Calu3 (cell line): ENCODE measurements at regions of chr4 and their contacts with region 1.

Region 1: DNA sequence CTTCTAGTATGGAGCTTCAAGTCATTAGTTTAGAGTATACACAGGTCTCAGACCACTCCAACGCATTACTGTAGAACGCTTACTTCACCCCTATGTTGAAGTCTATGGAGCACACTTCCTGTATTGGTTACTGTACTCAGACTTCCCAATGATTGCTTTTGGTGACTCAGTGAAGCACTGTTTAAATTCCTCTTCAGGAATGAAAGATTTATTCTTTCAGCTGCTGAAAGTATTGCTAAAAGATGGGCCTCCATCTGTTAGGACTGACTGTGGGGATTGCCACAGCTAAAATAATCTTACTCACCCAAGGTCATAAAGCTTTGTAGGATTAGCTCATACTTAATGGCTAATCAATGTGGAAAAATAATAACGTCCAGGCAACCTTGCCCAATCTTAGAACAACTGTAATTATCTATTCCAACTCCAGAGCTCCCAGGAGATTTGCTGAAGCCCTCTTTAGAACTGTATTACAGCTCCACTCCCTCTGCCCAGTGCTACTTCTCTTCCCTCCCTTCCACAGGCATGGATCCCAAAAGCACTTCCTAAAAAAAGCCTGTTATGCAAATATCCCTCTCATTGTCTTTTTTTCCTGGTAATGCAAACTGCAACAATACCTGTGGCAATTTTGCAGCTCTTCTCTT is 281.9 kb upstream of the HS3ST1 start:
- DNase-seq: no peak
- H3K4me3 Mint-ChIP-seq: no peak overlapping the region
- H3K27ac Mint-ChIP-seq: peak overlapping the region; percentile 43
- H3K4me1 Mint-ChIP-seq: peaks cover 20% of the 10 kb centered on the region
- H3K27me3 Mint-ChIP-seq: no peaks in the 10 kb centered on the region
- CTCF ChIP-seq: no peak

Region 2: DNA sequence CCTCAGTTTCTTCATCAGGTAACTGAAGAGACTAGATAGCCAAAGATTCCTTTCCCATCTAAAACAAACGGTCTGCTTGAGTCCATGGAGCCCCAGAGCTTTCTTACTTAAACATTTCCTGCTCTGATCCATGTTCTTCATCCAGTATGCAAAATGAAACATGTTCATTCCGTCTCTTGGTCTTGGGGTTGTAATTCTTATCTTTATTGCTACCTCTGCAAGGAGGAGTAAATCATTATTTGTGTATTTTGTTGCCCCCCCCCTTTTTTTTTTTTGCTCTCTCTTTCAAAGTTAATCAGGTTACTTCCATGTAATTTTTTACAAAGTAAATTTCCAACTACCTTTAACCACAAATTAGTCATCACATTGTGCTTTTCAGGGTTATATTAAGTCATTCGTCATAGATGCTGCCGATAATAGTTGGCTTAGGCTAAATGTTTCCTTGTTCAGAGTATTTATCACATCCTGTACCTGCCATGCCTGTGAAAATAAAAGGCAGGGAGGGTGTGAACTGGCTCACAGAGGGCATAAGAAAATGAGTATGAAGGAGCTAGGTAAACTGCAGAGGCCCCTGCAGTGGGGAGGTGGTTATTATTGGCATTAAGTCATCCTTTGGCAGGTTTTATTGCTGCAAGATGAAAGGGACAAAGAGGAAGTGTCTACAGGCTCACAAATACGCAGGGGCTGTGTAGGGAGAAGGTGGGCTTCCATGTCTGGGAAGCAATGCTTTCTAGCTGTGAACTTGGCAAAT is 205.2 kb before region 1 on chr4:
- CTCF ChIA-PET with region 1: no interaction called
- intact Hi-C with region 1: loop called (anchors 10 kb)
- DNase-seq: peak; percentile 69
- H3K4me3 Mint-ChIP-seq: peak overlapping the region; percentile 25
- H3K27ac Mint-ChIP-seq: peak overlapping the region; percentile 99
- H3K4me1 Mint-ChIP-seq: peaks cover 68% of the 10 kb centered on the region
- H3K27me3 Mint-ChIP-seq: no peaks in the 10 kb centered on the region
- CTCF ChIP-seq: no peak

Region 3: DNA sequence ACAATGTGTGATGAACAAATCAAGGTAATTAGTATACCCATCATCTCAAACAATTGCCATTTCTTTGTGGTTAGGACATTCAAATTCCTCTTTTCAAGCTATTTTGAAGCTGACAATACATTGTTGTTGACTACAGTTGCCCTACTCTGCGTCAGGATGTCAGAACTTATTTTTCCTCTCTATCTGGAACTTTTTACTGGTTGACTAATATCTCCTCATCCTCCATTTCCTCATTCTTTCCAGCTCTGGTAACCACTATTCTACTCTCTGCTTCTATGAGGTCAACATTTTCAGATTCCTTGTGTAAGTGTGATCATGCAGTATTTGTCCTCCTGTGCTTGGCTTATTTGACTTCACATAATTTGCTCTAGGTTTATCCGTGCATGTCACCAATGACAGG is 41.4 kb before region 1 on chr4:
- CTCF ChIA-PET with region 1: no interaction called
- intact Hi-C with region 1: loop called (anchors 5 kb)
- DNase-seq: peak; percentile 4
- H3K4me3 Mint-ChIP-seq: no peak overlapping the region
- H3K27ac Mint-ChIP-seq: peak overlapping the region; percentile 89
- H3K4me1 Mint-ChIP-seq: peaks cover 9% of the 10 kb centered on the region
- H3K27me3 Mint-ChIP-seq: no peaks in the 10 kb centered on the region
- CTCF ChIP-seq: no peak